Heart right ventricle (tissue), 16 donors: ENCODE measurements at regions of chr7 and their contacts with region 1.

Region 1: DNA sequence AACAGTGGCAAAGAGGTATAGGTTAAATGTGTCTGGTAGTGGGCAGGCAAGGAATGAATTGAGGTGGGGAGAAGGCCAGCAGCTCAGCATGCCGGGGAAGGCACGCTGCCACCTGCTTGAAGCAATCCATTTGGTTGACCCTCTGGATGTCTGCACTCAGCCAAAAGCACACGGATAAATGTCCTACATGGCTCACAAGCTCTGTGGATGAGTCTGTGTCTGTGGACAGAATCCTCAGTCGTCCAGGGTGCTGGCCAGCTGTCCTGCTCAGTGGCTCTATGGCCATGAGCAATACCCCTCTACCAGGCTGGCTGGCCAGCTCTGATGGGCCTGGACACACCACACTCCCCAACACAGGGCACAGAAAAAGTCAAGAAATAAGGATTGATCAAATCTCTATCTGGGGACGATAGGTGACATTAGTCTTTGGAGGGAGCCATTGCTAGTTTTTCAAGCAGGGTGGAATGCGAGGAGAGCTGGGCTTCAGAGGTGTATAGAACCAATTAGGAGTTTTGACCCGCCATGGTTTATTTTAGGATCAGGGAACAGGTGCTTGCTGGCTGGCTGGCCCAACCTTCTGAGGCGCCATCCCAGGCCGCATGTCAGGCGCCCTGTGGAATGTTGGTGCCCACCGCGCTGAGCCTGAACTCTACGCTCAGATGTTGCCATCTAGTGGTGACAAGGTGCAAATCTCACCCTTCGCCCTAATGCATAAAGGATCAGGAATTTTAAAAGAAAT is 493.4 kb downstream of the TNS3 start:
- DNase-seq: peak; percentile 54 to 65
- ATAC-seq: peak; percentile 85 to 95 (median 90)
- H3K4me3 ChIP-seq: no peak overlapping the region
- H3K27ac ChIP-seq: no peak overlapping the region
- H3K4me1 ChIP-seq: peaks cover 0 to 13% (median 7%) of the 10 kb centered on the region in 9 donors
- H3K27me3 ChIP-seq: no peaks in the 10 kb centered on the region
- CTCF ChIP-seq: peak; percentile 80 to 97 (median 92)

Region 2: DNA sequence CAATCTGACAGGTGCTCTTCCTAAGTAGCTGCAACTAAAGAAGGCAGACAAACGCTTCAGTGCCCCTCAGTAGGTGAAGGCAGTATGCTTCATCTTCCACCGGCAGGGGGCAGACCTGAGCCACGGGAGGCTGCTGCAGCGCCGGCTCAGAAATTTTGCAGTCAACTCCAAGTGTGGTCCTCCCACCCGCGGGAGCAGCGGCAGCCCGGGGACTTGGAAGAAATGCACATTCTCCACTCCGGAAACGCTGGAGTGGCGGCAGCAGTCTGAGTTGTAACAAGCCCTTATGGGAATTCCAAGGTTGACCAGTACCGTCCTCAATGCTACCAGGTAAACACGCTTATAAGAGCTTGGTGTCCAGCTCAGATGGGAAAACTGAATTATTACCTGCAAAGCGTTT is 1170.8 kb before region 1 on chr7:
- intact Hi-C with region 1: loop called (anchors 2 to 5 kb)
- DNase-seq: peak; percentile 84 to 85
- ATAC-seq: peak in 7 of 8 donors; percentile 25 to 58 (median 57)
- H3K4me3 ChIP-seq: peak overlapping the region in 5 of 10 donors; percentile 63 to 77 (median 67)
- H3K27ac ChIP-seq: no peak overlapping the region
- H3K4me1 ChIP-seq: peaks cover 5 to 55% (median 30%) of the 10 kb centered on the region in 9 donors
- H3K27me3 ChIP-seq: peaks cover 0 to 55% (median 0%) of the 10 kb centered on the region in 7 donors
- CTCF ChIP-seq: peak; percentile 89 to 98 (median 96)

Region 3: DNA sequence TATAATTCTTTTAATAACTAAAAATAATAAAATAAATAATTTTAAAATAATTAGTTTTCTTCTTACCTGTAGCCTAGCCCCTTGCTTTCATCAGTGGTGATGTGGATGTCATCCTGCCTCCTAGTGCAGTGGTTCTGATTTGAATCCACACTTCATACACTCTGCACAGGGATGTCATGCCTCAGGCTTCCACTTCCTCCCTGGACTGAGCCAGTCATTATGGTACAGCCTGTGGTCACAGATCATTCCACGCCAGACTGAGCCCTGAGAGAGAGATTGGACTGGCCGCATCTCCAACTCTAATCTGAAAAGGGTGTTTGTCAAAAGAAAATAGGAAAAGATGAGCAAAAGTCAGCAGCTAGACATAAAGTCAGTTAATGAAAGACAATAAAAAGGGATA is 731.2 kb before region 1 on chr7:
- intact Hi-C with region 1: loop called (anchors 5 to 10 kb)
- DNase-seq: no peak
- ATAC-seq: no peak
- H3K4me3 ChIP-seq: no peak overlapping the region
- H3K27ac ChIP-seq: no peak overlapping the region
- H3K4me1 ChIP-seq: no peaks in the 10 kb centered on the region
- H3K27me3 ChIP-seq: peaks cover 0 to 2% (median 0%) of the 10 kb centered on the region in 7 donors
- CTCF ChIP-seq: no peak

Region 4: DNA sequence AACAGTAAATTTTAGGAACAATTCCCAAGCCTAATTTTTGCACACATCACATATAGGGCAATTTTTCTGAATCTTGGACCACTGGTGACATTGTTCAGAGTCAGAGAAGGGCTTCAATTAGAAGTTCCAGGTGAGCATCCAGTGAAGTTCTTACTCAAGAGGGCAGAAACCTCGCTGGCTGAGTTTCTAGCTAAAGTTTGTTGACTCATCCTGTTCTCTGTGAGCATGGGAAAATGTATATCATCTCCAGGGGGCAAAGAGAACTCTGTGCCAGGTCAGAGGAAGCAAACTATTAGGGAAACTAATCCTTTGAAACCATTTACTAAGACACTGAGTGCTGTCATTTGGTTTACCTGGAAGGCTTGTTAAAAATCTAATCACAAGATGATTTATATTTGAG is 471.9 kb before region 1 on chr7:
- intact Hi-C with region 1: loop called in 1 of 10 experiments (anchors 10 kb)
- DNase-seq: no peak
- ATAC-seq: no peak
- H3K4me3 ChIP-seq: no peak overlapping the region
- H3K27ac ChIP-seq: no peak overlapping the region
- H3K4me1 ChIP-seq: peaks cover 0 to 17% (median 0%) of the 10 kb centered on the region in 9 donors
- H3K27me3 ChIP-seq: no peaks in the 10 kb centered on the region
- CTCF ChIP-seq: no peak

Region 5: DNA sequence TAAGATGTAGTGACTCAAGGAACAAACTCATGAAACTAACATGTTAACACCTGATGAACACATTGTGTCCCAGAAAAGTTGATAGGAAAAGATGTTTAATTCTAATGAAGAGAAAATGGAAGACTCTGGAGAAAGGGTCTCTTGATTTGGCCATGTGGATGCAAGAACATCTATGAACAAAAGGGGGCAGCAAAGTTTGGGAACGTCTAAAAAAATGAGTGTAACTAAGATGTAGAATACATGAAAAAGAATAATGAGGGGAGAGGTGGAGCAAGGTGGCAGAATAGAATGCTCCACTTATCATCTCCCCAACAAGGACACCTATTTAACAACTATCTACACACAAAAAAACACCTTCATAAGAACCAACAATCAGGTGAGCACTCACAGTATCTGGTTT is 311.7 kb before region 1 on chr7:
- intact Hi-C with region 1: loop called in 9 of 10 experiments (anchors 1 to 10 kb)
- DNase-seq: no peak
- ATAC-seq: no peak
- H3K4me3 ChIP-seq: no peak overlapping the region
- H3K27ac ChIP-seq: no peak overlapping the region
- H3K4me1 ChIP-seq: peaks cover 0 to 35% (median 18%) of the 10 kb centered on the region in 9 donors
- H3K27me3 ChIP-seq: no peaks in the 10 kb centered on the region
- CTCF ChIP-seq: peak; percentile 8 to 68 (median 47)

Region 6: GRCh38 chr7:46839651-46840050 is 248.8 kb before region 1 on chr7:
- intact Hi-C with region 1: no loop called
- DNase-seq: no peak
- ATAC-seq: no peak
- H3K4me3 ChIP-seq: no peak overlapping the region
- H3K27ac ChIP-seq: no peak overlapping the region
- H3K4me1 ChIP-seq: peaks cover 0 to 4% (median 0%) of the 10 kb centered on the region in 9 donors
- H3K27me3 ChIP-seq: no peaks in the 10 kb centered on the region
- CTCF ChIP-seq: no peak

Region 7: DNA sequence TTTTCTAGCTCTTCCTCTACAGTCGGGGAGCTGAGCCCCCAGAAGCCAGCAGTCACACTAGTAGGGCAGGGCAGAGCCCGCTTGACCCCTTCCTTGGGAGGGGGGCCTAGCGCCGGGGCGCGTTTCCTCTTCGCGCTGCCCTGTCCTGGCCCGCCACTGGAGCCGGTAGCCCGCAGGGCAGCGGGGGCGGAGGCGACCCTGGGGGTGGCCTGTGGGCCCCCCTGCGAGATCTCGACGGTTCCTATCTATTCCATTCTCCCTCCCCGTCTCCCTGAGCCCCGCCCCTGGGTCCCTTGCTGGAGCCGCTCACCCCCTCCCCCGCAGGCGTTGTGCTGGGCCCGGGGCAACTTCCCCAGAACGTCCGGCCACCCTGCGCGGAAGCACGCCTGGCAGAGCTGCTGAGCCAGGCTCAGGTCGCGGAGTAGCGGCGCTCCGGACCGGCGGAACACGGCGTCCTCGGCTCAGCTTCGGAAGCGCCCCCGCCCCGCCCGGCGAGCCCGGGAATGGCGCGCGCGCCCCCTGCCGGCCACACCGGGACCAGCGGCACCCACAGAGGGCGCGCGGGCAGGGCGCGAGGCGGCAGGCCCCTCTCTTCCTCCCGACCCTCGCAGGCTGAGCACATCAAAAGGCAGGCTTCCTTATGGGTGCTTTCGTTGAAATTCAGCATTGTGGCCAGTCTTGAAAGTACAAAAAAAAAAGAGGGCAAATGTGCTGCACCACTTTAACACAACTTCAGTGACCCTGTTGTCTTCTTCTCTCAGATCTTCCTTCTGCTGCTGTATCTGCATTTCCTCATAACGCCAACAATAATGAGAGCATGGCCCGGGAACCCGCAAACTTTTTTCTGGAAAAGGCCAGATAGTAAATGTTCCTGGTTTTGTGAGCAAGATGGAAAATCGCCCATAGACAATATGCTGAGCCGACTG is 165.8 kb after region 1 on chr7:
- intact Hi-C with region 1: loop called in 1 of 10 experiments (anchors 10 kb)
- DNase-seq: peak; percentile 73 to 88
- ATAC-seq: peak; percentile 91 to 96 (median 92)
- H3K4me3 ChIP-seq: peak overlapping the region; percentile 32 to 80 (median 67)
- H3K27ac ChIP-seq: peak overlapping the region; percentile 81 to 96 (median 89)
- H3K4me1 ChIP-seq: peaks cover 2 to 17% (median 15%) of the 10 kb centered on the region in 9 donors
- H3K27me3 ChIP-seq: no peaks in the 10 kb centered on the region
- CTCF ChIP-seq: peak; percentile 88 to 100 (median 95)